ENCODE measurements at regions of chr4 and their contacts with region 1.

Region 1: DNA sequence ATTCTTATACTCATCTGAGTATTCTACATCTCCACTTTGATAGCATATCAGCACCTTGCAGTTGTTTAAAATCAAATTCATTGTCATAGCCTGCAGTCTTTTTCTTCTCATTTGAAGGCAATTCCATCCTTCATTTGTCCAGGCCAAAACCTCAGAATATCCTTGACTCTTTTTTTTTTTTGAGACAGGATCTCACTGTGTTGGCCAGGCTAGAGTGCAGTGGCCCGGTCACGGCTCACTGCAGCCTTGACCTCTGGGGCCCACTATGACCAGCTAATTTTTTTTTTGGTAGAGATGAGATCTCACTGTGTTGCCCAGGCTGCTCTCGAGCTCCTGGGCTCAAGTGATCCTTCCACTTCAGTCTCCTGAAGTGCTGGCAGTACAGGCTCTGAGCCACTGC is 2.6 kb downstream of the MRPL1 start:
- DNase-seq: no peak
- H3K4me3 ChIP-seq: no peak overlapping the region
- H3K27ac ChIP-seq: no peak overlapping the region
- H3K4me1 ChIP-seq: peaks cover 4 to 31% (median 16%) of the 10 kb centered on the region in 3 donors
- H3K27me3 ChIP-seq: no peaks in the 10 kb centered on the region
- CTCF ChIP-seq: no peak
- POLR2A ChIP-seq: no peak

Region 2: DNA sequence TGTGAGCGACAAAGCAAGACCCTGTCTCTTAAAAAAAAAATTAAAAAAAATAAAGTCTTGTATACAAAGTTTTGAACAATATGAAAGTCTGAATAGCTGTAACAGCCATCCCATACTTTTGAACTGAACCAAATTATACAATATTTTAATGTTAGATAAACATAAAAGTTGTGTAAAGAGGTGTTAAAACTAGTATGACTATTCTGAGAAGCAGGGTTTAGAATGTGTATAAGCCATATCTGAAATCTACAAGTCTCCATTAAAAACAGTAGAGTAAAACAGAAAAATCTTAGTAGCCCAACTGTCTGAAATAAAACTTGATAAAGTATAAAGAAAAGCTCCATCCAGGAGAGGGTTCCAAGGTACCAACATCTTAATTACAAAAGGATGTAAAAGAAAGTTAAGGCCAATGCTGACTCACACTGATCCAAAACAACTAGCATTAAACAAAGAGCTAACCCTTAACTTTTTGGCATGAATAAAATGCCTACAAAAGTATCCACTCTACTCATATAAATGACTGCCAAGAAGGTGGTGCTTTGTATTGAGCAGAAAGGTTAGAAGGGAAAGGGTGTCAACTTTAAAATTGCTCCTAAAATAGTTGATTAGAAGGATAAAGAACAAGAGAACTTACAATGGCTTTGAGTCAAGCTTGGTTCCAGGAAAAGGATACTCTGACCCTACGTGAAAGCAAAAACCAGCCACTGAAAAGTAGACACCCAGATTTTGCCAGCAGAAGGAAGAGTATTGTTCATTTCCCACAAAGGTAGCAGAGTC is 64.6 kb before region 1 on chr4:
- intact Hi-C with region 1: no loop called
- DNase-seq: no peak
- H3K4me3 ChIP-seq: no peak overlapping the region
- H3K27ac ChIP-seq: peak overlapping the region in 3 of 4 donors; percentile 45 to 59 (median 47)
- H3K4me1 ChIP-seq: peaks cover 7 to 72% (median 17%) of the 10 kb centered on the region in 3 donors
- H3K27me3 ChIP-seq: no peaks in the 10 kb centered on the region
- CTCF ChIP-seq: no peak
- POLR2A ChIP-seq: no peak

Region 3: DNA sequence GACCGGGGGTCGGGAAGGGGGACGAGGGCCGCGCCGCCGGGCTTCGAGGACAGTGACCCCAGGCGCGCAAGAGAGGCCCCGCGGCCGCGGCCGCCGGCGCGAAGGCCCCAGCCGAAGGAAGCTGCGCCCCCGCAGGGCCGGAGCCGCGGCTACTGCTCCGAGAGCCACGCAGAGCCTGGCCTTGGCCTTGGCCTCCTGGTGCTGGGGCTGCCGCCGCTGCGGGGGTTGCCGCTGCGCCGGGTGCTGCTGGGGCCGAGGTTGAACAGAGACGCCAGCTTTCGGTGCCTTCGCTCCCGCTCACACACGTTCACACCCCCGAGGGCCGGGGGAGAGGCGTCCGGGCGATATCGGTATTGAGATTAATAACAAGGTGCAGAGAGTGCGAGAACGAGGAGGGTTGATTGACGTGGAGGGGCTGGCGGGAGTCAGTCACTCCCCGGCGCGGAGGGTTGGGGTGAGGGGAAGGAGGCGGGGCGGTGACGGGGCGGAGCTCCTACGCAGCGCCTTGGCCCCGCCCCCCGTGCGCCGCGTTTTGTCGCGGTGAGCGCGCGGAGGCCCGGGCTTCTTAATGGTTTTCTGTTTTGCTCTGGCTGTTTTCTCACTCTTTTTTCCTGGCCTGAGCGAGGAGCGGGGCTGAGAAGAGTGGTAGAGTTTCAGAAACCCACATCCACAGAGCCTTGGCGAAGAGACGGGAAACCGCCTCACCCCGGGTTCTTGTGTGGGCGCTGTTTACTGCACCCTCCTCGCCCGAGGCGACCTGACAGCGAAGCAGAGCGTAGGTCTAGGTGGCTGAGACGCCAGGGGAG is 45.2 kb before region 1 on chr4:
- intact Hi-C with region 1: loop called (anchors 5 kb)
- DNase-seq: peak; percentile 66
- H3K4me3 ChIP-seq: peak overlapping the region; percentile 74 to 96 (median 91)
- H3K27ac ChIP-seq: peak overlapping the region; percentile 96 to 100 (median 98)
- H3K4me1 ChIP-seq: peaks cover 0 to 52% (median 26%) of the 10 kb centered on the region in 3 donors
- H3K27me3 ChIP-seq: no peaks in the 10 kb centered on the region
- CTCF ChIP-seq: peak in 2 of 6 experiments; percentile 3 to 4
- POLR2A ChIP-seq: peak in 3 of 4 donors; percentile 15 to 95 (median 71)

Region 4: GRCh38 chr4:77927991-77928925 is 63.0 kb after region 1 on chr4:
- intact Hi-C with region 1: no loop called
- DNase-seq: no peak
- H3K4me3 ChIP-seq: no peak overlapping the region
- H3K27ac ChIP-seq: peak overlapping the region in 2 of 4 donors; percentile 59 to 66
- H3K4me1 ChIP-seq: peaks cover 0 to 59% (median 5%) of the 10 kb centered on the region in 3 donors
- H3K27me3 ChIP-seq: no peaks in the 10 kb centered on the region
- CTCF ChIP-seq: no peak
- POLR2A ChIP-seq: no peak

Measured in esophagus squamous epithelium (tissue), 5 donors.